ENCODE measurements at regions of chrX and their contacts with region 1.

Region 1: DNA sequence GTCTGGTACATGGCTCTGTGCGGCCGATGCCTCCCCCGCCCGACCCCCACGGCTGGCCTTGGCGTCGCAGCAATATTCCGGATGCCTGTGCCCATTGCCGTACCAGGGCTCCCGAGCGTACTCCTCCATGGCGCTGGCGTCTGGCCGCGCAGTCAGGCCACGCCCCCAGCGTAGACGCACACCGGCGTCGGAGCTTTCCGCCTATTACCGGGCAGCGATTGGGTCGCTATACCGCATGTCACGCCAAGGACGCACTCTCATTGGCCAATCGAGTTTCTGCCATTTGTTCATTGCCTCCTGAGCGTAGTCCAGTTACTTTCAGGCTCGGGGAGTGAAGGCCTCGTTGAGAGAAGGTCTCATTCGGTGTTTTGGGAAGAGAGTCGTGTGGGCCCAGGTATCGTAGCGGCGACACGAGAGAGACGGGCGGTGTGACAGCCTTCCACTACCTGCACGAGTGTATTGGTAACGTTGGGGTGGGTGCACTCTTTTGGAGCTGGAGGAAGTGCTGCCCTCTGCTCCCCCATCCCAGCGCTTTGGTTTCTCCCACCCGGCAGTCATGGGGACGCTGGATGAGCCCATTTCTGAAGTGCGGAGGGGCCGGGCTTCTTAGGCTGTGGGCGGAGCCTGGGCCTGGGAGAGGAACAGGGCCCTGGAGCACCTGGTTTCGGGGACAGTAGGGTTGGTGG is at the starts of genes PQBP1 and TIMM17B:
- DNase-seq: peak; percentile 93
- ATAC-seq: peak; percentile 90
- H3K4me3 ChIP-seq: peak within 1 kb of the TSS; percentile 75 to 77
- H3K27ac ChIP-seq: peak within 1 kb of the TSS; percentile 96
- H3K4me1 ChIP-seq: peaks cover 3 to 11% of the 10 kb centered on the region in 2 experiments; a peak in 1 of 4 replicates
- H3K27me3 ChIP-seq: no peaks in the 10 kb centered on the region
- CTCF ChIP-seq: no peak
- POLR2A ChIP-seq: peak; percentile 62
- RAD21 ChIP-seq: no peak
- total RNA-seq, gene PQBP1: 67.1 TPM
- total RNA-seq, gene TIMM17B: 41.7 TPM

Region 2: DNA sequence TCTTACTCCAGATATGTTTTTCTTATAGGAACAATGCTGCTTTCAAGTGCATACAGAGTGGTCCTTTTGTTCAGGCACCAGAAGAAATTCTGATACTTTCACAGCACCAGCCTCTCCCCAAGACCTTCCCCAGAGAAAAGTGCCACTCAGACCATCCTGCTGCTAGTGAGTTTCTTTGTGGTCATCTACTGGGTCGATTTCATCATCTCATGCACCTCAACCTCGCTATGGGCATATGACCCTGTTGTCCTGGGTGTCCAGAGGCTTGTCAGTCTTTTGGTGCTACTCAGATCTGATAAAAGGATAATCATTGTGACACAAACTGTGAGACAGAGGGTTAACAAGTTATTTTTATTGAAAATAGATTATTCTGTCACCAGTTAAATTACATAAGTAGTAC is 261.0 kb before region 1 on chrX:
- CTCF ChIA-PET with region 1: no interaction called
- POLR2A ChIA-PET with region 1: no interaction called
- RAD21 ChIA-PET with region 1: no interaction called
- intact Hi-C with region 1: no loop called
- DNase-seq: no peak
- ATAC-seq: no peak
- H3K4me3 ChIP-seq: no peak overlapping the region
- H3K27ac ChIP-seq: no peak overlapping the region
- H3K4me1 ChIP-seq: peaks cover 3 to 5% of the 10 kb centered on the region in 2 experiments; a peak in 3 of 4 replicates
- H3K27me3 ChIP-seq: no peaks in the 10 kb centered on the region
- CTCF ChIP-seq: no peak
- POLR2A ChIP-seq: no peak
- RAD21 ChIP-seq: no peak

Region 3: GRCh38 chrX:48801280-48802088 is 96.3 kb before region 1 on chrX and contains the start of gene HDAC6:
- CTCF ChIA-PET with region 1: no interaction called
- POLR2A ChIA-PET with region 1: interaction called, 7 read pairs
- RAD21 ChIA-PET with region 1: no interaction called
- intact Hi-C with region 1: loop called (anchors 10 kb)
- DNase-seq: peak; percentile 97
- ATAC-seq: peak; percentile 84
- H3K4me3 ChIP-seq: peak within 1 kb of the TSS; percentile 72 to 73
- H3K27ac ChIP-seq: peak within 1 kb of the TSS; percentile 80
- H3K4me1 ChIP-seq: peaks cover 9 to 14% of the 10 kb centered on the region in 2 experiments; a peak in 2 of 4 replicates
- H3K27me3 ChIP-seq: no peaks in the 10 kb centered on the region
- CTCF ChIP-seq: no peak
- POLR2A ChIP-seq: no peak
- RAD21 ChIP-seq: no peak
- total RNA-seq, gene HDAC6: 79.9 TPM

Region 4: GRCh38 chrX:48911412-48912182 is 13.8 kb after region 1 on chrX and contains the start of gene SLC35A2:
- CTCF ChIA-PET with region 1: no interaction called
- POLR2A ChIA-PET with region 1: interaction called, 12 read pairs
- RAD21 ChIA-PET with region 1: no interaction called
- intact Hi-C with region 1: no loop called
- DNase-seq: peak; percentile 77
- ATAC-seq: peak; percentile 90
- H3K4me3 ChIP-seq: peak within 1 kb of the TSS; percentile 84 to 87
- H3K27ac ChIP-seq: peak within 1 kb of the TSS; percentile 78
- H3K4me1 ChIP-seq: peaks cover 0 to 18% of the 10 kb centered on the region in 2 experiments
- H3K27me3 ChIP-seq: no peaks in the 10 kb centered on the region
- CTCF ChIP-seq: no peak
- POLR2A ChIP-seq: peak; percentile 40
- RAD21 ChIP-seq: no peak
- total RNA-seq, gene SLC35A2: 35.0 TPM

Measured in HCT116 (cell line).